ENCODE measurements at regions of chr1 and their contacts with region 1.

Region 1: GRCh38 chr1:43934101-43934985 is 742 bp downstream of the ARTN start:
- DNase-seq: peak; percentile 72
- H3K4me3 Mint-ChIP-seq: no peak overlapping the region
- H3K27ac Mint-ChIP-seq: no peak overlapping the region
- H3K4me1 Mint-ChIP-seq: peaks cover 17% of the 10 kb centered on the region
- H3K27me3 Mint-ChIP-seq: peaks cover 28% of the 10 kb centered on the region

Region 2: GRCh38 chr1:43706598-43707495 is 227.5 kb before region 1 on chr1:
- CTCF ChIA-PET with region 1: interaction called, 14 read pairs
- POLR2A ChIA-PET with region 1: interaction called, 3 read pairs
- intact Hi-C with region 1: no loop called
- DNase-seq: peak; percentile 95
- H3K4me3 Mint-ChIP-seq: peak overlapping the region; percentile 85
- H3K27ac Mint-ChIP-seq: peak overlapping the region; percentile 58
- H3K4me1 Mint-ChIP-seq: peaks cover 29% of the 10 kb centered on the region
- H3K27me3 Mint-ChIP-seq: no peaks in the 10 kb centered on the region

Region 3: GRCh38 chr1:43836267-43836951 is 97.9 kb before region 1 on chr1:
- CTCF ChIA-PET with region 1: interaction called, 12 read pairs
- POLR2A ChIA-PET with region 1: no interaction called
- intact Hi-C with region 1: no loop called
- DNase-seq: peak; percentile 79
- H3K4me3 Mint-ChIP-seq: no peak overlapping the region
- H3K27ac Mint-ChIP-seq: no peak overlapping the region
- H3K4me1 Mint-ChIP-seq: peaks cover 33% of the 10 kb centered on the region
- H3K27me3 Mint-ChIP-seq: no peaks in the 10 kb centered on the region

Region 4: DNA sequence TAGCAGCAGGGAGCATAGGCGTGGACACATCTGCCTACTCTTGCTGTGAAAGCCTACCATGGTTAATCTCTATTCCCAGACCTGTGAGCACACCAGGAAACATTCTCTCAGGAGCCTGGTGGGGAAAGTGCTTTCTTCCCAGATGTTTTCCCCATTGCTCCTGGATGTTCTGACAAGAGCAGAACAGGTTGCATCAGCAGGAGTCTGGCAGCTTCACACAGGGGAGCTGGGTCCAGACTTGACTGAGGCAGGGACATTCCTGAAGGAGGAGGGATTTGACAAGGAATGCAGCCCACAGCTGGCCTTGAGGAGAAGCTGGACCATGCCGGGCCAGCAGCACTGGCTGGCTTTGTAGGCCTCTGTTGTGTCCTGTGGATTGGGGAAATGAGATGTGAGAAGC is 21.7 kb before region 1 on chr1:
- CTCF ChIA-PET with region 1: interaction called, 15 read pairs
- POLR2A ChIA-PET with region 1: no interaction called
- intact Hi-C with region 1: no loop called
- DNase-seq: no peak
- H3K4me3 Mint-ChIP-seq: no peak overlapping the region
- H3K27ac Mint-ChIP-seq: no peak overlapping the region
- H3K4me1 Mint-ChIP-seq: no peaks in the 10 kb centered on the region
- H3K27me3 Mint-ChIP-seq: no peaks in the 10 kb centered on the region

Region 5: GRCh38 chr1:43952731-43953346 is 18.5 kb after region 1 on chr1:
- CTCF ChIA-PET with region 1: interaction called, 122 read pairs
- POLR2A ChIA-PET with region 1: no interaction called
- intact Hi-C with region 1: no loop called
- DNase-seq: no peak
- H3K4me3 Mint-ChIP-seq: no peak overlapping the region
- H3K27ac Mint-ChIP-seq: no peak overlapping the region
- H3K4me1 Mint-ChIP-seq: peaks cover 20% of the 10 kb centered on the region
- H3K27me3 Mint-ChIP-seq: no peaks in the 10 kb centered on the region

Region 6: DNA sequence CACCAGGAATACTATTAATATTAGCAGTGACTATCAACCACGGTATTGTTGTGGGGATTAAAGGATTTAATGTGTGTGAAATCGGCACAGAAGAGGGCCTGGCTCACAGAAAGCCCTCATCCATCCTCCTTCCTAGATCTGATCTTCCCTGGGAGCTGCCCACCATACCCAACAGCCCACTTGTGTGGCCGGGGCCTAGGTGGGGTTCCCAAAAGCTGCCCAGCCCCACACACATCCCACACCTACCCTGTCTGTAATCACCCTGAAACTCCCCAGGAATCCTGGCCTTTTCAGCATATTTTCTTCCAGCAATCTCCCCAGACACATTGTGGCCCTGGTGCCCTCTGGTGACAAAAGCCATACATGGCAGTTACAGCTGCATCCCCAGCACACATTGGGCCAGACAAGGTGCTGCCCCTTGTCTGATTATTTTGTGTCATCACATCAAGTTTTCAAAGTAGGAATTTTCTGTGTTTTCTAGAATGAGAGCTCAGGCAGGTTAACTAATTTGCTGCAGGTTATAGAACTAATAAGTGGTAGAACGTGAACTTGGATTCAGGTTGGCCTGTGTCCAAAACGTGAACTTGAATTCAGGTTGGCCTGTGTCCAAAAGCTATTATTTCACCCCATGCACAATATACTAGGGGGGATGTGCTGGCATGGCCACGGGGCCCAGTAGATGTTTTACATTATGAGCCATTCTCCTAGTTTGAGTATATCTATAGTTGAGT is 102.2 kb after region 1 on chr1:
- CTCF ChIA-PET with region 1: interaction called, 10 read pairs
- POLR2A ChIA-PET with region 1: no interaction called
- intact Hi-C with region 1: no loop called
- DNase-seq: peak; percentile 81
- H3K4me3 Mint-ChIP-seq: no peak overlapping the region
- H3K27ac Mint-ChIP-seq: no peak overlapping the region
- H3K4me1 Mint-ChIP-seq: peaks cover 2% of the 10 kb centered on the region
- H3K27me3 Mint-ChIP-seq: no peaks in the 10 kb centered on the region